Heart right ventricle (tissue), 16 donors: ENCODE measurements at regions of chr18 and their contacts with region 1.

Region 1: GRCh38 chr18:9055185-9055584 is 47.3 kb upstream of the NDUFV2 start:
- DNase-seq: no peak
- ATAC-seq: peak in 4 of 8 donors; percentile 23 to 66 (median 48)
- H3K4me3 ChIP-seq: no peak overlapping the region
- H3K27ac ChIP-seq: no peak overlapping the region
- H3K4me1 ChIP-seq: peaks cover 0 to 11% (median 0%) of the 10 kb centered on the region in 9 donors
- H3K27me3 ChIP-seq: no peaks in the 10 kb centered on the region
- CTCF ChIP-seq: peak in 6 of 9 donors; percentile 18 to 56 (median 44)

Region 2: DNA sequence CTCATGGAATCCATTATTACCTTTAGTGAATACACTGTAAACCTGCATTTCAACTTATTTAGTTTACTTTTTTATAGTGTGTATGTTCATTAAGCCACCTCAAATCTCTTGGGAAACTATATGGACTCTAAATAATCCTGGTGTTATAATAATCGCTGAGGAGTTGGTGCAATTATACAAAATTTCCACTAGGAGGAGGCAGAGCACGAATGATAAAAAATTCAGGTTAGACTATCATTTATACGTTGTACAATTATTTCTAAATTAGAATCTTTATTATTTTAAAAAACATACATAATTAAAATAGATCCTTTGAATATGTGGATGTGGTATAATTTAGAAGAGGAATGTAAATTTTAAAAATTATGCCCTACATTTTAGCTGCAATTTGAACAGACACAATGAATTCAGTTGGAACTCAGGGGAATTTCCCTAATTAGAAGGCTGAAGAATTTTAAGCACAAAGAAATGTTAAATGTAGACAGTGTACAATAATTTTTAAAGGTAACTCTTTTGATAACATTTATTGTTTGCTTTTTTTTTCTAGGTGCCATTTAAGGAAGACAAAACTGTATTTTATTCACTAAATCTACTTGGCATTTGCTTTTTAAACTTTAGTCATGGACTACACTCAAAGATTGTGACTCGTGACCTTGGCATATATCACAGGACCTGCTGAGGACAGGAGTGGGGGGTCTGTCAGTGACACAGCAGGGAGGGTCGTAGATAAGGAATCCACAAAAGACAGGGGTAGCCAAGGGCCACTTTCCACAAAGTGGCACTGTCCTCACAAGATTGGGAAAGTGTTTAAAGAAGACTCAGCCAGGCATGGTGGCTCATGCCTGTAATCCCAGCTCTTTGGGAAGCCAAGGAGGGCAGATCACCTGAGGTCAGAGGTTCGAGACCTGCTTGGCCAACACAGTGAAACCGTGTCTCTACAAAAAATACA is 400.4 kb before region 1 on chr18:
- intact Hi-C with region 1: loop called in 5 of 10 experiments (anchors 5 to 10 kb)
- DNase-seq: no peak
- ATAC-seq: no peak
- H3K4me3 ChIP-seq: no peak overlapping the region
- H3K27ac ChIP-seq: no peak overlapping the region
- H3K4me1 ChIP-seq: no peaks in the 10 kb centered on the region
- H3K27me3 ChIP-seq: peaks cover 0 to 14% (median 4%) of the 10 kb centered on the region in 7 donors
- CTCF ChIP-seq: peak; percentile 55 to 86 (median 77)

Region 3: DNA sequence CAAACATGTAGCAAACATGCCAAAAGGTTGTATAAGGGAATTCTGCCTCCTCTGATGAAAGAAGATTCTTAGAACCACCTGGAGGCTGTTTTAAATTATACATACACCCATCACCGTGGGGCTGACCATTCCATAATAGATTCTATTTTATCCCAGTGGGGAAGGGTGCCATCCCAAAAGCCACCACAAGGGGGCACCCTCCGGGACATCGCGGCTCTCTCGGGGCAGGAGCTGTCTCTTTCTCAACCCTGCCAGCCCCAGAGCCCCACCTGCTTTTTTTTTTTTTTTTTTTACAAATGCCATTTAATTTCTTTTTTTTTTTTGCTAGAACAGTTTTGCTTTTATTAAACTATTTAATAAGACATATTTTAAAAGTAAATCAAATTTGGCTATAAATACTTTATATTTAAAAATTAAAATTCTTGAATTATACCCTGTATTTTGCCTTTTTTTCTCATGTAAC is 358.4 kb before region 1 on chr18:
- intact Hi-C with region 1: loop called in 1 of 10 experiments (anchors 5 kb)
- DNase-seq: peak; percentile 65 to 79
- ATAC-seq: peak; percentile 81 to 91 (median 88)
- H3K4me3 ChIP-seq: no peak overlapping the region
- H3K27ac ChIP-seq: no peak overlapping the region
- H3K4me1 ChIP-seq: no peaks in the 10 kb centered on the region
- H3K27me3 ChIP-seq: peaks cover 0 to 15% (median 0%) of the 10 kb centered on the region in 7 donors
- CTCF ChIP-seq: peak; percentile 86 to 95 (median 92)

Region 4: DNA sequence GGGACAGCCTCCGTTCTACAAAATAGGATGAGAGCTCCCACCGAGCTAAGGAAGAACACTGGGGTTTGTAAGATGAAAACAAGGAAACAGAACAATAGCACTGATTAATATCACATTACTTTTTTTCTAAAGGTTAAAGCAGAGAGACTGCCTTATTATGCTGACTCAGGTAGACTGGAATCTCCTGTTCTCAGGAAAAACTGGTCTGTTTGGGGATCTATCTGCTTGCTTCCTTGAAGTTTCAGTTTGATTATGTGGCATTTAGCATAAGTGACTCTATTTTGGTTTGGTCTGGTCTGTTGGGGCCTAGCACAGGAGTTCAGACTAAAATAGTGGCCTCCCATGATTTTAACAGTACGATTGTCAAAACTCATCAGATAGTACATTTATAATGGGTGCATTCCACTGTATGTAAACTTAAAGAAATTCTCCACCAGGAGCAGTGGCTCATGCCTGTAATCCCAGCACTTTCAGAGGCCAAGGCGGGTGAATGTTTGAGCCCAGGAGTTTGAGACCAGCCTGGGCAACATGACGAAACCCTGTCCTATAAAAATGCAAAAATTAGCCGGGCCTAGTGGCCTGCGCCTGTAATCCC is 16.8 kb before region 1 on chr18:
- intact Hi-C with region 1: no loop called
- DNase-seq: no peak
- ATAC-seq: no peak
- H3K4me3 ChIP-seq: no peak overlapping the region
- H3K27ac ChIP-seq: no peak overlapping the region
- H3K4me1 ChIP-seq: no peaks in the 10 kb centered on the region
- H3K27me3 ChIP-seq: no peaks in the 10 kb centered on the region
- CTCF ChIP-seq: no peak